Activated naive CD4-positive, alpha-beta T cell treated with anti-CD3 and anti-CD28 coated beads for 36 hours (primary cell): ENCODE measurements at regions of chr17 and their contacts with region 1.

Region 1: DNA sequence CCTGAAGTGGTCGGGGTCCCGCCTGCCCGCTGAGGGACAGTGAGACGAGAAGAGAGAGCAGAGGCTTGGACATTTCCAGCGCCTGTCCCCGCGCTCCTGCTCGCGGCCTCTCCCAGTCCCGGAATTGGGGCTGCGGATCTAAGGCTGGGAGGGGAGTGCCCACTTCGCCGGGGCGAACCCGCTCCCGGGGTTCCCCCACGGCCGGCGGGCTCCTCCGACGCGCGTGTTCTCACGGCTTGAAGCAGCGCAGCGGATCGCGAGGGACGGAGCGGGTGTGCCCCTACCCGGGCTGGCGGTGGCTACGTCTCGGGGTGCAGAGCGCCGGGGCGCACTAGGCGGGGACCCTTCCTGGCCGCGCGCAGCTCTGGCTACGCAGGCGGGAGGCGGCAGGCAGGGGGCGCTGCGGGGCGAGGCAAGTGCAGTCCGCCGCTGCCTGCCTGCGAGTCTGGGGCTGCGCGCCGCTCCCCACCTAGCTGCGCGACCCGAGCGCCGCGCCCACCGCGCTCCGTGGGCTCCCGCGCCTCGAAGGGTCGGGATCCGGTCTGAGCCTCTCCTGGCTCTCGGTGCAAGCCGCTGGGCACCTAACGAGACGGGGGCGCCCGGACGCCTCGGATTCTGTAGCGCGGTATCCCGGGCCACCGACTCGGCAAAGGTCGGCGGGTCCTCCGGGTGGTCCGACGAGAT is 1.2 kb downstream of the NGFR start:
- DNase-seq: peak; percentile 84
- H3K4me3 Mint-ChIP-seq: peak overlapping the region; percentile 65
- H3K27ac Mint-ChIP-seq: no peak overlapping the region
- H3K4me1 Mint-ChIP-seq: peaks cover 19% of the 10 kb centered on the region
- H3K27me3 Mint-ChIP-seq: peaks cover 53% of the 10 kb centered on the region

Region 2: GRCh38 chr17:49407981-49408501 is 88.3 kb before region 1 on chr17:
- CTCF ChIA-PET with region 1: interaction called, 8 read pairs
- intact Hi-C with region 1: loop called (anchors 1 kb)
- DNase-seq: peak; percentile 91
- H3K4me3 Mint-ChIP-seq: no peak overlapping the region
- H3K27ac Mint-ChIP-seq: no peak overlapping the region
- H3K4me1 Mint-ChIP-seq: peaks cover 29% of the 10 kb centered on the region
- H3K27me3 Mint-ChIP-seq: no peaks in the 10 kb centered on the region

Region 3: GRCh38 chr17:49414622-49415350 is 81.5 kb before region 1 on chr17 and contains the start of gene PHB1:
- CTCF ChIA-PET with region 1: interaction called, 5 read pairs
- intact Hi-C with region 1: loop called (anchors 2 kb)
- DNase-seq: peak; percentile 99
- H3K4me3 Mint-ChIP-seq: peak within 1 kb of the TSS; percentile 100
- H3K27ac Mint-ChIP-seq: peak within 1 kb of the TSS; percentile 78
- H3K4me1 Mint-ChIP-seq: peaks cover 32% of the 10 kb centered on the region
- H3K27me3 Mint-ChIP-seq: no peaks in the 10 kb centered on the region
- total RNA-seq, gene PHB1: 390 to 404 TPM

Region 4: DNA sequence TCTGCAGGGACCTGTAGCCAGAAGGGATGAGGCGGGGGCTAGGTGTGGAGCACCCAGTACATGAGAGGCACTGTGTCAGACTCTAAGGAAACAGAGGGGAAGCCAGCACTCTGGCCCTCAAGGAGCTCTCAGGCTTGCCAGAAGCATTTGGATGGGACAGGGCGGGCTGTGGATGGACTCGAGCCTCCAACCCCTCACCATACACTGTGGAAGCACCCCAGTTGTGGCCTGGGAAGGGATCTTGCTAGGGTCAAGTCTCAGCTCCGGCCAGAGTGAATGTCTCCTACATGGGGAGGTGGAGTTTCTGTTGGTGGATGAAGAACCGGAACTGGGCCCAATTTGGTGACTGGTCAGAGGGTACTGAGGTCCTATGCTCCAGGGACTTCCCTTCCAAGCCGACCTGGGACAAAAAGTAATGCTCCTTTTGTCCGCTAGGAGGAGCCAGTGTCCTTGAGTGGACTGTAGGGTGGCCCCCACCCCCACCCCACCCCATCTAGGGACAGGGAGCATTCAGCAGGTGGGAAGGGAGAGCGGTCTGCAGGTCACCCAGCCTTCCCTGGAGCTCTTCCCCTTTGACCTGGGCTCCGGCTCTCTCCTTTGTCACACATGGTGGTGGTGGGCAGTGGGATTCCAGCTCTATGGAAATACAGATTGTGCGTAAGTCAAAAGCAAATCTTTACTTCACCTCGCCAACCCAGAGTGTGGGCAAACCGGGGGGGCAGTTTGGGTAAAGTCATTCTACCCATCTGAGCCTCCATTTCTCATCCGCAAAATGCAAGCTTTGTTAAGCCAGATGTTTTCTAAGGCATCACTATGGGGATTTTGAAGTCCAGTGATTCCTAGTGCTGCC is 61.3 kb before region 1 on chr17:
- CTCF ChIA-PET with region 1: interaction called, 5 read pairs
- intact Hi-C with region 1: loop called (anchors 5 kb)
- DNase-seq: peak; percentile 58
- H3K4me3 Mint-ChIP-seq: no peak overlapping the region
- H3K27ac Mint-ChIP-seq: no peak overlapping the region
- H3K4me1 Mint-ChIP-seq: no peaks in the 10 kb centered on the region
- H3K27me3 Mint-ChIP-seq: peaks cover 14% of the 10 kb centered on the region

Region 5: DNA sequence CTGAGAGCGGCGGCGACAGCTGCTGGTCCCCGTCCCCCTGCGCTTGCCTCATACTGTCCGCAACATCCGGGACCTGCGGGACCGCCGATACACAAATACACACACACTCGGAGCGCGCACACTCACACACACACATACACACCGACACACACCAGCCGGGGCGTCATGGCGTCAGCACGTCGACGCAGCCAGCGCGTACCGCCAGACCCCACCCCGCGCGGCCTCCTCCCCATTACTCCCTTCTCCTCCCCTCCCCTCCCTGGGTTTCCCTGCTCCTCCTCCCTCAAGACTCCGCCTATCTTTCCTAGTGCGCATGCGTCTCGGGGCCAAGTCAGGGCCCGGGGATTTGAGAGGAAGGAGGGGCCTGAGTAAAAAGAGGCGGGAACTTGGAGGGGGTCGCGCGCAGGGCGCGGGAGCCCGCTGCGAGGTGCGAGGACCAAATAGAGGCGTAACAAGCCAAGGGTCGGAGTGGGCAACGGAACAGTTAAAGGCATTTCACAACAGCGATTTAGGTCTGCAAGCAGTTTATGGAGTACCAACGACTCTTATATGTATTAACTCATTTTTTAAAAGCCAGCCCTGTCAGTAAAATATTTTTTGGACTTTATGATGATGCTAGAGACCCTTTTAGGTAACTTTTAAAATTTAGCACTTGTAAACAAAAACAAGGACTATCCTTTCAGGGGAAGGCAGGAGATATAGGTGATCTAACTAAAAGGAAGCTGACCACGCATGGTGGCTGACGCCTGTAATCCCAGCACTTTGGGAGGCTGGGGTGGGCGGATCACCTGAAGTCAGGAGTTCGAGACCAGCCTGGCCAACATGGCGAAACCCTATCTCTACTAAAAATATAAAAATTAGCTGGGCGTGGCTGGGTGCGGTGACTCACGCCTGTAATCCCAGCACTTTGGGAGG is 181.9 kb after region 1 on chr17 and contains the start of gene SPOP:
- CTCF ChIA-PET with region 1: no interaction called
- intact Hi-C with region 1: no loop called
- DNase-seq: peak; percentile 100
- H3K4me3 Mint-ChIP-seq: peak within 1 kb of the TSS; percentile 93
- H3K27ac Mint-ChIP-seq: peak within 1 kb of the TSS; percentile 95
- H3K4me1 Mint-ChIP-seq: peaks cover 38% of the 10 kb centered on the region
- H3K27me3 Mint-ChIP-seq: no peaks in the 10 kb centered on the region
- total RNA-seq, gene SPOP: 66.9 to 69.2 TPM

Region 6: GRCh38 chr17:49968380-49969133 is 472.2 kb after region 1 on chr17:
- CTCF ChIA-PET with region 1: no interaction called
- intact Hi-C with region 1: loop called (anchors 5 kb)
- DNase-seq: peak; percentile 82
- H3K4me3 Mint-ChIP-seq: peak overlapping the region; percentile 90
- H3K27ac Mint-ChIP-seq: peak overlapping the region; percentile 50
- H3K4me1 Mint-ChIP-seq: peaks cover 45% of the 10 kb centered on the region
- H3K27me3 Mint-ChIP-seq: peaks cover 78% of the 10 kb centered on the region